Sigmoid colon (tissue), 7 donors: ENCODE measurements at regions of chr10 and their contacts with region 1.

Region 1: GRCh38 chr10:122565728-122566206 is 5.2 kb downstream of the DMBT1 start:
- DNase-seq: peak; percentile 88
- H3K4me3 ChIP-seq: peak overlapping the region in 3 of 4 donors; percentile 19 to 29 (median 28)
- H3K27ac ChIP-seq: no peak overlapping the region
- H3K4me1 ChIP-seq: peaks cover 0 to 4% (median 0%) of the 10 kb centered on the region in 4 donors
- H3K27me3 ChIP-seq: peaks cover 0 to 10% (median 0%) of the 10 kb centered on the region in 3 donors
- CTCF ChIP-seq: peak; percentile 47 to 83 (median 78)
- EP300 ChIP-seq: no peak
- POLR2A ChIP-seq: no peak

Region 2: GRCh38 chr10:121886997-121887622 is 678.7 kb before region 1 on chr10:
- intact Hi-C with region 1: no loop called
- DNase-seq: peak; percentile 75
- H3K4me3 ChIP-seq: no peak overlapping the region
- H3K27ac ChIP-seq: no peak overlapping the region
- H3K4me1 ChIP-seq: no peaks in the 10 kb centered on the region
- H3K27me3 ChIP-seq: no peaks in the 10 kb centered on the region
- CTCF ChIP-seq: peak; percentile 67 to 81 (median 77)
- EP300 ChIP-seq: no peak
- POLR2A ChIP-seq: no peak

Region 3: GRCh38 chr10:122298598-122299301 is 267.0 kb before region 1 on chr10:
- intact Hi-C with region 1: loop called (anchors 2 kb)
- DNase-seq: peak; percentile 89
- H3K4me3 ChIP-seq: peak overlapping the region in 3 of 4 donors; percentile 18 to 25 (median 22)
- H3K27ac ChIP-seq: no peak overlapping the region
- H3K4me1 ChIP-seq: peaks cover 0 to 26% (median 11%) of the 10 kb centered on the region in 4 donors
- H3K27me3 ChIP-seq: no peaks in the 10 kb centered on the region
- CTCF ChIP-seq: peak; percentile 87 to 91 (median 87)
- EP300 ChIP-seq: no peak
- POLR2A ChIP-seq: no peak

Region 4: GRCh38 chr10:122388287-122388997 is 177.3 kb before region 1 on chr10:
- intact Hi-C with region 1: no loop called
- DNase-seq: no peak
- H3K4me3 ChIP-seq: no peak overlapping the region
- H3K27ac ChIP-seq: no peak overlapping the region
- H3K4me1 ChIP-seq: peaks cover 0 to 28% (median 15%) of the 10 kb centered on the region in 4 donors
- H3K27me3 ChIP-seq: no peaks in the 10 kb centered on the region
- CTCF ChIP-seq: no peak
- EP300 ChIP-seq: no peak
- POLR2A ChIP-seq: no peak

Region 5: DNA sequence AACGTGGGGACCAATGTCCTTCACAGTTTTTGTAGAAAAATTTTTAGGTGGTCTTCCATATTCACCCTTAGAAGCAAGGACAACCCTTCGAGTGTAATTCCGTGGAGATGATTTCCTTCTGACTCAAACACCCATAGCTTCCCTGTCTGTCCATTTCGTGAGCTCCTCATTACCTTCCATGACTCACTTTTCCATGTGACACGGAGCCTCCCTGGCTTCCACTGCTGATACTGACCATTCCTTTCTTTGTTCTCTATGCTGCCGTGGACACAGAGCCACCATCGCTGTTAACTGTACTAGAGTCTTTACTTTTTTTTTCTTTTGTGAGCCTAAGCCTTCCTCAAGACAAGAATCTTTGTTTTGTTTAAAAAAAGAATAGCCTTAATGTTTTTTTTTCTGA is 123.8 kb before region 1 on chr10:
- intact Hi-C with region 1: loop called (anchors 2 kb)
- DNase-seq: no peak
- H3K4me3 ChIP-seq: no peak overlapping the region
- H3K27ac ChIP-seq: no peak overlapping the region
- H3K4me1 ChIP-seq: peaks cover 0 to 14% (median 0%) of the 10 kb centered on the region in 4 donors
- H3K27me3 ChIP-seq: no peaks in the 10 kb centered on the region
- CTCF ChIP-seq: no peak
- EP300 ChIP-seq: no peak
- POLR2A ChIP-seq: no peak

Region 6: GRCh38 chr10:122503012-122503411 is 62.8 kb before region 1 on chr10:
- intact Hi-C with region 1: loop called (anchors 5 kb)
- DNase-seq: no peak
- H3K4me3 ChIP-seq: no peak overlapping the region
- H3K27ac ChIP-seq: peak overlapping the region in 2 of 4 donors; percentile 81 to 85
- H3K4me1 ChIP-seq: peaks cover 0 to 51% (median 47%) of the 10 kb centered on the region in 4 donors
- H3K27me3 ChIP-seq: no peaks in the 10 kb centered on the region
- CTCF ChIP-seq: no peak
- EP300 ChIP-seq: no peak
- POLR2A ChIP-seq: no peak